Breast epithelium (tissue), 4 donors: ENCODE measurements at regions of chr11 and their contacts with region 1.

Region 1: GRCh38 chr11:122375687-122376398 is 259.8 kb upstream of the BLID start:
- DNase-seq: no peak
- H3K4me3 ChIP-seq: no peak overlapping the region
- H3K27ac ChIP-seq: no peak overlapping the region
- H3K4me1 ChIP-seq: no peaks in the 10 kb centered on the region
- H3K27me3 ChIP-seq: no peaks in the 10 kb centered on the region
- CTCF ChIP-seq: no peak
- POLR2A ChIP-seq: no peak

Region 2: DNA sequence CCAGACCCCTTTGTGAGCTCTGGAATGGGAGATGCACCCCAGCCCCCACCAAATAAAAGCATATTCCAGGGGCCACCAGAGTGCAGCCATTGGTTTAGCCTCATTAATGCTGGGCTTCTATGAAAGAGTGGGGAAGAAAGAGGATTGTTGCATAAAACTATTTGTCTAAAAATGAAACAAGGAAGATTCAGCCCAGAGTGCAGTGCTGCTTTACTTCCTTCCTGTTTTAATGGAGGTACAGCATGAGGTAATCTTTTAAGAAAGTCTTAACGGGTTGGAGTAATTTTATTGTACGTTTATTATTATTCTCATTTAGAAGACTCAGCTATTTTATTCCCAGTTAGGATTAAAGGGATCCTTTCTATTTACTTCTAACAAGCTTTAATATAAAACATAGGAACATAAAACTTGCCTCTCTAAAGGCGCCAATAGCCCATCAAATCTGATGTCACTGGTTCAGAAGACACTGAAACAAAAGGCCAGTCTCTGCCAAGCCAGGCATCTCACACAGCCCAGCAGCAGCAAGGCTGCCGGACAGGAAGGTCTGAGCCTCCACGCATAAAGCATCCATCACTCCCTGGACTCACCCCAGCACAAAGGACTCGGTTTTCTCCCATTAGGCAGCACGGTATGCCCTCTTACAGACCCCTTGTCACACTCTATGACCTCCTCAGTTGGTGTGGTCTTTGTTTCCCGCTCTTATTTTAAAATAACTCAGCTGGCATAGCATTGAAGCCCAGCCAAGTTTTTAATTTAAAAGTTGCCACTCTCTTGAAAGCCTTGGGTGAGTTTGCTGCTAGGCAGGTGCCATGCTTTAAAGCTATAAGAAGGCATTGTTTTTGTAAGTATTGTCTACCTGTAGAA is 55.8 kb before region 1 on chr11:
- intact Hi-C with region 1: loop called (anchors 2 kb)
- DNase-seq: no peak
- H3K4me3 ChIP-seq: no peak overlapping the region
- H3K27ac ChIP-seq: no peak overlapping the region
- H3K4me1 ChIP-seq: no peaks in the 10 kb centered on the region
- H3K27me3 ChIP-seq: no peaks in the 10 kb centered on the region
- CTCF ChIP-seq: no peak
- POLR2A ChIP-seq: no peak